ENCODE measurements at regions of chr3 and their contacts with region 1.

Region 1: GRCh38 chr3:187679638-187680396 is 9.6 kb upstream of the SST start:
- DNase-seq: peak; percentile 58
- H3K4me3 ChIP-seq: no peak overlapping the region
- H3K27ac ChIP-seq: no peak overlapping the region
- H3K4me1 ChIP-seq: no peaks in the 10 kb centered on the region
- H3K27me3 ChIP-seq: no peaks in the 10 kb centered on the region
- CTCF ChIP-seq: peak; percentile 85 to 91 (median 86)
- POLR2A ChIP-seq: no peak

Region 2: GRCh38 chr3:187112934-187113793 is 566.7 kb before region 1 on chr3:
- intact Hi-C with region 1: loop called (anchors 10 kb)
- DNase-seq: no peak
- H3K4me3 ChIP-seq: no peak overlapping the region
- H3K27ac ChIP-seq: no peak overlapping the region
- H3K4me1 ChIP-seq: no peaks in the 10 kb centered on the region
- H3K27me3 ChIP-seq: no peaks in the 10 kb centered on the region
- CTCF ChIP-seq: peak; percentile 17 to 68 (median 40)
- POLR2A ChIP-seq: no peak

Region 3: GRCh38 chr3:187223799-187224198 is 456.0 kb before region 1 on chr3:
- intact Hi-C with region 1: loop called (anchors 2 kb)
- DNase-seq: no peak
- H3K4me3 ChIP-seq: no peak overlapping the region
- H3K27ac ChIP-seq: no peak overlapping the region
- H3K4me1 ChIP-seq: no peaks in the 10 kb centered on the region
- H3K27me3 ChIP-seq: no peaks in the 10 kb centered on the region
- CTCF ChIP-seq: peak in 1 of 4 experiments; percentile 23
- POLR2A ChIP-seq: no peak

Region 4: GRCh38 chr3:187319699-187320302 is 360.0 kb before region 1 on chr3:
- intact Hi-C with region 1: loop called (anchors 1 kb)
- DNase-seq: peak; percentile 57
- H3K4me3 ChIP-seq: no peak overlapping the region
- H3K27ac ChIP-seq: no peak overlapping the region
- H3K4me1 ChIP-seq: no peaks in the 10 kb centered on the region
- H3K27me3 ChIP-seq: peaks cover 5% of the 10 kb centered on the region
- CTCF ChIP-seq: peak; percentile 77 to 95 (median 82)
- POLR2A ChIP-seq: no peak

Measured in prostate gland (tissue), 2 donors.